Upper lobe of right lung (tissue), 1 donor: ENCODE measurements at regions of chr15 and their contacts with region 1.

Region 1: GRCh38 chr15:89358755-89359439 is 24.3 kb upstream of the POLG start:
- DNase-seq: peak; percentile 90
- ATAC-seq: peak; percentile 95
- H3K4me3 ChIP-seq: peak overlapping the region; percentile 45
- H3K27ac ChIP-seq: no peak overlapping the region
- H3K4me1 ChIP-seq: peaks cover 7% of the 10 kb centered on the region
- H3K27me3 ChIP-seq: peaks cover 92% of the 10 kb centered on the region
- CTCF ChIP-seq: peak; percentile 97

Region 2: GRCh38 chr15:89429023-89429422 is 70.1 kb after region 1 on chr15:
- intact Hi-C with region 1: loop called (anchors 5 kb)
- DNase-seq: no peak
- ATAC-seq: no peak
- H3K4me3 ChIP-seq: no peak overlapping the region
- H3K27ac ChIP-seq: no peak overlapping the region
- H3K4me1 ChIP-seq: peaks cover 12% of the 10 kb centered on the region
- H3K27me3 ChIP-seq: peaks cover 15% of the 10 kb centered on the region
- CTCF ChIP-seq: no peak

Region 3: GRCh38 chr15:89496155-89497098 is 137.5 kb after region 1 on chr15 and contains the start of gene RHCG:
- intact Hi-C with region 1: no loop called
- DNase-seq: no peak
- ATAC-seq: peak; percentile 44
- H3K4me3 ChIP-seq: peak within 1 kb of the TSS; percentile 24
- H3K27ac ChIP-seq: no peak within 1 kb of the TSS
- H3K4me1 ChIP-seq: no peaks in the 10 kb centered on the region
- H3K27me3 ChIP-seq: peaks cover 53% of the 10 kb centered on the region
- CTCF ChIP-seq: no peak
- total RNA-seq, gene RHCG: not detected